Tibial artery (tissue), 4 donors: ENCODE measurements at regions of chr18 and their contacts with region 1.

Region 1: GRCh38 chr18:36296650-36297416 is 680 bp upstream of the FHOD3 start:
- DNase-seq: peak; percentile 67 to 89
- H3K4me3 ChIP-seq: peak overlapping the region; percentile 64 to 70
- H3K27ac ChIP-seq: peak overlapping the region; percentile 81 to 83
- H3K4me1 ChIP-seq: peaks cover 0 to 19% (median 9%) of the 10 kb centered on the region in 4 donors
- H3K27me3 ChIP-seq: no peaks in the 10 kb centered on the region
- CTCF ChIP-seq: peak; percentile 37 to 62

Region 2: DNA sequence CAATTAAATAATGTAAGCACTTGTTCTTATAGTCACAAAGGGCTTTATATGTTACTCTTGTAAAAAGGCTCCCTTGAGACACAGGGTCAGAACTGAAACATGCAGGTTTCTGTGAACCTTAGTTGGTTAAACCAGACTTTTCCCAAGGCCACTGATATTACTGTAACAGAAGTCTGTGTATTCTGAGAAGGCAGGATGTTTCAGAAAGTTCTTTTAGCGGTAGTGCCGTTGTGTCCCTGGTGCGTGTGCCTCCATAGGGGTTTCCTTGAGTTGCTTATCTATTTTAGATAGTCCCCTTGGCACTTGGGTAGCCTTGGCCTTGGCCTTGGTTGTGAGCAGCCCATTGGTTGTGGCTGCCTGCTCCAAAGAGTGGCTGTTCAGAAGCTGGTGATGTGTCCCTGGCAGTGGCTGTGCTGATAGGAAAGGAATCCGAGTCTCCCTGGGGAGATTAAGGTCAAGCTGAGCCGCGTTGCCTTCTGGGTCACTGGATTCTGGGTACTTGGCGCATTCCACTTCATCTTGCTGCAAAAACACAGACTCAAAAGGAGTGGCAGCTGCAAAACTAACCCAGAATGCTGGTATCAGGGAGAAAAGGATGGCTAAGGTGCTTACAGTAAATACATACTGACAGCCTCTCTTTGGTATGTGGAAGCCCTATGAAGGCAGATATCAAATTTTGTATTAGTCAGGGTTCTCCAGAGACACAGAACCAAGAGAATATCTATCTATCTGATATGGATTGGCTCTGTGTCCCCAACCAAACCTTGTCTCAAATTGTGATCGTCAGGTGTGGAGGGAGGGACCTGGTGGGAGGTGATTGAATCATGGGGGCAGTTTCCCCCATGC is 70.4 kb after region 1 on chr18:
- intact Hi-C with region 1: loop called (anchors 5 kb)
- DNase-seq: peak; percentile 25 to 86
- H3K4me3 ChIP-seq: no peak overlapping the region
- H3K27ac ChIP-seq: peak overlapping the region; percentile 62 to 70
- H3K4me1 ChIP-seq: peaks cover 0 to 45% (median 23%) of the 10 kb centered on the region in 4 donors
- H3K27me3 ChIP-seq: no peaks in the 10 kb centered on the region
- CTCF ChIP-seq: no peak

Region 3: GRCh38 chr18:36464126-36464651 is 167.4 kb after region 1 on chr18:
- intact Hi-C with region 1: loop called (anchors 10 kb)
- DNase-seq: no peak
- H3K4me3 ChIP-seq: no peak overlapping the region
- H3K27ac ChIP-seq: no peak overlapping the region
- H3K4me1 ChIP-seq: peaks cover 0 to 28% (median 3%) of the 10 kb centered on the region in 4 donors
- H3K27me3 ChIP-seq: no peaks in the 10 kb centered on the region
- CTCF ChIP-seq: no peak

Region 4: GRCh38 chr18:36572135-36572856 is 275.5 kb after region 1 on chr18:
- intact Hi-C with region 1: loop called (anchors 5 kb)
- DNase-seq: peak in 1 of 2 donors; percentile 76
- H3K4me3 ChIP-seq: no peak overlapping the region
- H3K27ac ChIP-seq: peak overlapping the region in 1 of 2 donors; percentile 16
- H3K4me1 ChIP-seq: peaks cover 0 to 5% (median 0%) of the 10 kb centered on the region in 4 donors
- H3K27me3 ChIP-seq: no peaks in the 10 kb centered on the region
- CTCF ChIP-seq: peak; percentile 53 to 58